ENCODE measurements at regions of chr2 and their contacts with region 1.

Region 1: DNA sequence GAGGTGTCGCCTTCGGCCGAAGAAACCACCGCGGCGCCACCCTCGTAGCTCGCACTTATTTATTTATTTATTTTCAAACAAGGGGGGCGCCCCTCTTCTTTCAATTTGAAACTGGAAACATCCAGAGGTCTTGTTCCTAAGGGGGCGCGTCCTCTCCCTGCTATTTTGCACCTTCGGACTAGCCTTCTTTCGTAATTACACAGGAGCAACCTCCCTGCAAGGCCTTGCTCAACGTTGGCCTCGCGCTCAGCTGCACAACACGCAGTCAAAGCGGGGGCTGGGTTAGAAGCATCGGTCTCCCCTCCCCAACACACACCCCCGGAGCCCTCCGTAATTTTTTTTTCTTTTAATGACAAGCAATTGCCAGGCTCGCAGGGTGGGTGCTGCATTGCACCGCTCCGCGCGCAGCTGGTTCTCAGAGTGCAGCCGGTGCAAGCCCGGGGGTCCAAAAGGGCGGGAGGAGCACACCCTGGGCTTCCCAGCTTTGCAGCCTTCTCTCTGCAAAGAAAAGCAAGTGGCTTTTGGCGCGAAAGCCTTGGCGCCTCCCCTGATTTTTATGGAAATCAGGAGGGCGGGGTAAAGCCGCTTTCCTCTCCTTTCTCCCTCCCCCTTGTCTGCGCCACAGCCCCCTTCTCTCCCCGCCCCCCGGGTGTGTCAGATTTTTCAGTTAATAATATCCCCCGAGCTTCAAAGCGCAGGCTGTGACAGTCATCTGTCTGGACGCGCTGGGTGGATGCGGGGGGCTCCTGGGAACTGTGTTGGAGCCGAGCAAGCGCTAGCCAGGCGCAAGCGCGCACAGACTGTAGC is at the start of gene MYCN:
- DNase-seq: peak; percentile 81
- H3K4me3 Mint-ChIP-seq: peak within 1 kb of the TSS; percentile 99
- H3K27ac Mint-ChIP-seq: peak within 1 kb of the TSS; percentile 50
- H3K4me1 Mint-ChIP-seq: peaks cover 22% of the 10 kb centered on the region
- H3K27me3 Mint-ChIP-seq: no peaks in the 10 kb centered on the region
- CTCF ChIP-seq: peak; percentile 86
- total RNA-seq, gene MYCN: 5.5 and 8.7 TPM in 2 replicates

Region 2: GRCh38 chr2:15799432-15799827 is 140.6 kb before region 1 on chr2:
- CTCF ChIA-PET with region 1: interaction called, 4 read pairs
- intact Hi-C with region 1: loop called (anchors 5 kb)
- DNase-seq: peak; percentile 13
- H3K4me3 Mint-ChIP-seq: no peak overlapping the region
- H3K27ac Mint-ChIP-seq: no peak overlapping the region
- H3K4me1 Mint-ChIP-seq: peaks cover 12% of the 10 kb centered on the region
- H3K27me3 Mint-ChIP-seq: peaks cover 60% of the 10 kb centered on the region
- CTCF ChIP-seq: no peak

Region 3: GRCh38 chr2:16012619-16013358 is 72.7 kb after region 1 on chr2:
- CTCF ChIA-PET with region 1: no interaction called
- intact Hi-C with region 1: loop called (anchors 2 kb)
- DNase-seq: peak; percentile 80
- H3K4me3 Mint-ChIP-seq: peak overlapping the region; percentile 33
- H3K27ac Mint-ChIP-seq: peak overlapping the region; percentile 0
- H3K4me1 Mint-ChIP-seq: peaks cover 36% of the 10 kb centered on the region
- H3K27me3 Mint-ChIP-seq: no peaks in the 10 kb centered on the region
- CTCF ChIP-seq: no peak

Region 4: DNA sequence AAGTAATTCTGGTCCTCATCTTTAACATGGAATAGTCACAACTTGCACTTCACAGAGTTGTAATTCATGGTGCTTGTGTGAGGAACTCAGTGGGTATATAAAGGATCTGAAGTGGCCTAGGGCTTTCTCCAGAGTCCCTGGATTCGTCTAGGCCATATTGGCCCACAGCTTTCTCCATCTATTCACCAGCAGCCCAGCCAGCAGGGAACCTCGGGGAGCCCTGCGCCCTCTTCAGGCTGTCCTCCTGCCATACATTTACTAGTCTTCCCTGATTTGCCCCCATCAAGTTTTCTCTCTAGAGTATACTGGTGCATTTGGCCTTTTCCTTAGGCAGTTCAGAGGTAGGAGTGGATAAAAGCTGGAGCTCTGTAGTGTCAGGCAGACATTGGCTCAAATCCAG is 278.6 kb after region 1 on chr2:
- CTCF ChIA-PET with region 1: interaction called, 7 read pairs
- intact Hi-C with region 1: loop called (anchors 2 kb)
- DNase-seq: peak; percentile 53
- H3K4me3 Mint-ChIP-seq: no peak overlapping the region
- H3K27ac Mint-ChIP-seq: no peak overlapping the region
- H3K4me1 Mint-ChIP-seq: no peaks in the 10 kb centered on the region
- H3K27me3 Mint-ChIP-seq: peaks cover 27% of the 10 kb centered on the region
- CTCF ChIP-seq: peak; percentile 12

Region 5: DNA sequence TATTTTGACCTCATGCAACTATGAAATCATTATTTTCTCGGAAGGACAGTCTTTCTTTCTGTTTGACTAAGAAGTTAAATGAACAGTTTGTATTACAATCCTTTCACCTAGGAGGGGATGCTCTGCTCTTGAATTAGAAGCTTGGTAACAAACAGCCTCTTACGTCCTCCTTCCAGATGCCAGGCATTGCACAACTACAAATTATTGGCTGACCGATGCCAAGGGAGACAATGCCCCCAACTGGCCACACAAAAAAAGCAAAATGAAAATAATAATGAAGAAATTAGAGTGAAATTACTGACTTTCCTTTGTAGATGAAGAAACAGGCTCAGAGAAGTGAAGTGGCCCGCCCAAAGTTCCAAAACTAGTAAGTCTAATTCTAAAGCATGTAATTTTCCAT is 547.6 kb after region 1 on chr2:
- CTCF ChIA-PET with region 1: interaction called, 4 read pairs
- intact Hi-C with region 1: loop called (anchors 1 kb)
- DNase-seq: peak; percentile 36
- H3K4me3 Mint-ChIP-seq: no peak overlapping the region
- H3K27ac Mint-ChIP-seq: no peak overlapping the region
- H3K4me1 Mint-ChIP-seq: no peaks in the 10 kb centered on the region
- H3K27me3 Mint-ChIP-seq: peaks cover 17% of the 10 kb centered on the region
- CTCF ChIP-seq: peak; percentile 28

Measured in Calu3 (cell line).